A673 (cell line): ENCODE measurements at regions of chr5 and their contacts with region 1.

Region 1: GRCh38 chr5:42950440-42951292 is 89.5 kb downstream of the ANXA2R start:
- DNase-seq: peak; percentile 97
- H3K4me3 ChIP-seq: peak overlapping the region; percentile 49
- H3K27ac ChIP-seq: peak overlapping the region; percentile 96
- H3K4me1 ChIP-seq: peaks cover 17% of the 10 kb centered on the region
- H3K27me3 ChIP-seq: no peaks in the 10 kb centered on the region
- CTCF ChIP-seq: no peak

Region 2: GRCh38 chr5:42915306-42915866 is 35.3 kb before region 1 on chr5:
- CTCF ChIA-PET with region 1: no interaction called
- POLR2A ChIA-PET with region 1: no interaction called
- intact Hi-C with region 1: loop called (anchors 2 kb)
- DNase-seq: no peak
- H3K4me3 ChIP-seq: no peak overlapping the region
- H3K27ac ChIP-seq: no peak overlapping the region
- H3K4me1 ChIP-seq: no peaks in the 10 kb centered on the region
- H3K27me3 ChIP-seq: no peaks in the 10 kb centered on the region
- CTCF ChIP-seq: no peak

Region 3: DNA sequence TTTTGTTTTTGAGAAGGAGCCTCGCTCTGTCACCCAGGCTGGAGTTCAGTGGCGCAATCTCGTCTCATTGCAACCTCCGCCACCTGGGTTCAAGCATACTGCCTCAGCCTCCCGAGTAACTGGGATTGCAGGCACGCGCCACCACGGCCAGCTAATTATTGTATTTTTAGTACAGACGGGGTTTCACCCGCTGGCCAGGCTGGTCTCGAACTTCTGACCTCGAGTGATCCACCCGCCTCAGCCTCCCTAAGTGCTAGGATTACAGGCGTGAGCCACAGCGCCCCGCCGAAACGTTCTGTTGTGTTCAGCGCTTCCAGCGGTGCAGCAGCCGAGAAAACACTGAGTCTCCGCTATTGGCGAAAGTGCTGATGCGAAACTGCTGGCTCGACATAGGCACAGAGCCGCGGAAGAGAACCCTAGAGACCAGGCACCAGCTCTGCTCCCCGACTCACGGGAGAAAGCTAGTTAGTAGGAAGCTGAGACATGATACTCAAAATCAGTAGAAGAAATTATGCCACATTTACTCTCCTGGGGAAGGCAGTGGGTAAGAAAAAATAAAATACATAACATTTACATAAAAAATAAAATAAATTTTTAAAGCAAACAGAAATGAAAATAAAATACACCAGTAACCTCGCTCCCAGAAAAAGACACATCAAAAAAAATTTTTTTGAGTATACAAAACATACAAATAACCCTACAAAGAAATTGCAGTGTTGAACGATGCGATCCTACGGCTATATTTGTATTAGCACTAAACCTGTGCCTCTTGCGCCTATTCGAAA is 57.9 kb after region 1 on chr5:
- CTCF ChIA-PET with region 1: no interaction called
- POLR2A ChIA-PET with region 1: no interaction called
- intact Hi-C with region 1: loop called (anchors 5 kb)
- DNase-seq: peak; percentile 98
- H3K4me3 ChIP-seq: peak overlapping the region; percentile 52
- H3K27ac ChIP-seq: peak overlapping the region; percentile 85
- H3K4me1 ChIP-seq: peaks cover 11% of the 10 kb centered on the region
- H3K27me3 ChIP-seq: no peaks in the 10 kb centered on the region
- CTCF ChIP-seq: peak; percentile 39; the same call in 1 of the 2 replicates

Region 4: GRCh38 chr5:43040287-43041098 is 89.8 kb after region 1 on chr5 and contains the start of gene ANXA2R:
- CTCF ChIA-PET with region 1: interaction called, 4 read pairs
- POLR2A ChIA-PET with region 1: no interaction called
- intact Hi-C with region 1: loop called (anchors 2 kb)
- DNase-seq: peak; percentile 97
- H3K4me3 ChIP-seq: peak within 1 kb of the TSS; percentile 62
- H3K27ac ChIP-seq: peak within 1 kb of the TSS; percentile 88
- H3K4me1 ChIP-seq: no peaks in the 10 kb centered on the region
- H3K27me3 ChIP-seq: no peaks in the 10 kb centered on the region
- CTCF ChIP-seq: peak; percentile 78
- total RNA-seq, gene ANXA2R: 1.4 and 1.9 TPM in 2 replicates

Region 5: DNA sequence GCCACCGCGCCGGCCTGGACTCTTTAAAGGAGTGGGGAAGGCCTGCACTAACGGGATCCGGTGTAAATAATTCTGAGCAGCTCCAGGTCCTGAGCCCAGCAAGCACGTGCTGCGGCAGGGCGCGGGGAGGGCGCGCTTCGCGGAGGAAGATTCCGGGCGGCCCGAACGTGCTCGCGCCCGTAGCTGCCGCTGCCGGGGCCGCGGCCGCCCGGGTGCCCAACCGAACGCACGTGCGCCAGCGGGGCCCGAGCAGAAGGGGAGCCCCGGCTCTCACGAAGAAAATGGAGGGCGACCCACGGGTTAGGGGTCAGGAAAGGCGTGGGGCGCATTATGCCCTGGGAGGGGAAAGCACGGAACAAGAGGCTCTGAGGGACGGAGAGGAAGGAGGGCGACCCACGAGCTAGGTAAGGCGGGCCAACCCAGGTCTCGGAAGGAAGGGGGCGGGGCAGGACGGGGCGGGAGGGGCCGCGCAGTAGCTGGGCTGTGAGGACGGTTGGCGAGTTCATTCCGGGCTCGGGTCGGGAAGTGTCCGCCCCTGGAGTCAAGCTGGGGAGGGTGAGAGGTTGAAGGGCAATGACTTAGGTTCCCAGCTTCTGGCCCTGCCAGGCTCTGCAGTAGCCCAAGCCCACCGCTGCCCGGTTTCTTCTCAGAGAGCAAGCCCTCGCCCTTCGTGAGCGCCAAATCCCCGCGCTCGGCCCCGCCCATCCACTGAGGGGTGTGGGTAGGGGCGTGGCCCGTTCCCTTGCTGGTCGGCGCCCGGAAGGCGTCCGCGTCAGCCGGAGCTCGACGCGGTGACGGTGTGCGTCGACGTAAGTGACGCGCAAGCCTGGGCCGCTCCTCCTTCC is 170.3 kb after region 1 on chr5 and contains the start of gene ZNF131:
- CTCF ChIA-PET with region 1: no interaction called
- POLR2A ChIA-PET with region 1: no interaction called
- intact Hi-C with region 1: loop called (anchors 5 kb)
- DNase-seq: peak; percentile 98
- H3K4me3 ChIP-seq: peak within 1 kb of the TSS; percentile 56
- H3K27ac ChIP-seq: peak within 1 kb of the TSS; percentile 90
- H3K4me1 ChIP-seq: peaks cover 23% of the 10 kb centered on the region
- H3K27me3 ChIP-seq: no peaks in the 10 kb centered on the region
- CTCF ChIP-seq: no peak
- total RNA-seq, gene ZNF131: 43.6 and 45.0 TPM in 2 replicates

Region 6: GRCh38 chr5:43227655-43228054 is 277.0 kb after region 1 on chr5:
- CTCF ChIA-PET with region 1: no interaction called
- POLR2A ChIA-PET with region 1: no interaction called
- intact Hi-C with region 1: no loop called
- DNase-seq: peak; percentile 46
- H3K4me3 ChIP-seq: no peak overlapping the region
- H3K27ac ChIP-seq: no peak overlapping the region
- H3K4me1 ChIP-seq: no peaks in the 10 kb centered on the region
- H3K27me3 ChIP-seq: no peaks in the 10 kb centered on the region
- CTCF ChIP-seq: no peak; the same call in 1 of the 2 replicates

Region 7: GRCh38 chr5:43313035-43313853 is 362.6 kb after region 1 on chr5 and contains the start of gene HMGCS1:
- CTCF ChIA-PET with region 1: no interaction called
- POLR2A ChIA-PET with region 1: no interaction called
- intact Hi-C with region 1: no loop called
- DNase-seq: peak; percentile 100
- H3K4me3 ChIP-seq: peak within 1 kb of the TSS; percentile 92
- H3K27ac ChIP-seq: peak within 1 kb of the TSS; percentile 86
- H3K4me1 ChIP-seq: peaks cover 29% of the 10 kb centered on the region
- H3K27me3 ChIP-seq: no peaks in the 10 kb centered on the region
- CTCF ChIP-seq: no peak
- total RNA-seq, gene HMGCS1: 142 and 162 TPM in 2 replicates